ENCODE measurements at regions of chr7 and their contacts with region 1.

Region 1: DNA sequence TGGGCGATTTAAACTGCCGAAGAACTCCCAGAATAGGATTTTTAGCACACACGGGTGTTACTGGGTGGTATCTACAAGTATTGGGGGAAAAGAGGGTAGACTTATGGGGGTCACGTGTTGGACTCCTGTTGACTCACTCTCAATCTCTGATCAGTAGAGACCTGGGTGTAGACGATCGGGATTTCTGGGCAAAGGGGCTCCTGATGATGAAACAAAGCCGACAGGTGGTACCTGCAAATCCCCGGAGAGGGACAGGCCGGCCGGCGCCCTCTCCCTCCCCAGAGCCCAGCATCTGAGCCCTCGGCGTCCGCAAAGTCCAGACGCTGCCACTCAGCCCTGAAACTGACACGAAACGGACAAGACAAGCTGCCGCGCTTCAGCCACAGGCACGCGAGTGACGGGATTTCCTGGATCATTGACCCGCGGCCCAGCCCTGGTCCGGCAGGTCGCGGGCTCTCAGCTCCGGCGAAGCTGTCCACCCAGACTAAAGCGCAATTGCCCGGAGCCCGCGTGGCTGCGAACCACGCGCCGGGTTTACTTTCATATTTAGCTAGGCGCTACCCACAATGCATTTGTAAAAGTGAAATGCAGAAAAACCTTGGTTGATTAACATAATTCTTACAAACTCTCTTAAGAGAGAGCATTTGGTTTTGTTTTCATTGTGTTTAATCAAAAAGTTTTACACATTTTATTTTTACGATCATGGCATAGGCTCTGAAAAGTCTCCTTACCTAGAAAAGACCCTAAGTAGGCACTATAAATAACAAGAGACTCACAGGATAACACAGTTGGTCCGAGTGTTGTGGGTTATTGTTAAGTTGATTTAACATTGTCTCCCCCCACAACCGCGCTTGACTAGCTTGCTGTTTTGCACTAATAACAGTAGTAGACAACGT is 56.9 kb upstream of the EZH2 start:
- DNase-seq: peak; percentile 84
- ATAC-seq: peak; percentile 72
- H3K4me3 Mint-ChIP-seq: peak overlapping the region; percentile 98
- H3K27ac Mint-ChIP-seq: peak overlapping the region; percentile 100
- H3K4me1 Mint-ChIP-seq: peaks cover 17% of the 10 kb centered on the region
- H3K27me3 Mint-ChIP-seq: no peaks in the 10 kb centered on the region
- CTCF ChIP-seq: no peak

Region 2: GRCh38 chr7:148458263-148458662 is 482.7 kb before region 1 on chr7:
- CTCF ChIA-PET with region 1: no interaction called
- POLR2A ChIA-PET with region 1: no interaction called
- intact Hi-C with region 1: no loop called
- DNase-seq: no peak
- ATAC-seq: no peak
- H3K4me3 Mint-ChIP-seq: no peak overlapping the region
- H3K27ac Mint-ChIP-seq: no peak overlapping the region
- H3K4me1 Mint-ChIP-seq: no peaks in the 10 kb centered on the region
- H3K27me3 Mint-ChIP-seq: peaks cover 2% of the 10 kb centered on the region
- CTCF ChIP-seq: no peak

Region 3: GRCh38 chr7:148698397-148699023 is 242.4 kb before region 1 on chr7 and contains the start of gene CUL1:
- CTCF ChIA-PET with region 1: no interaction called
- POLR2A ChIA-PET with region 1: interaction called, 10 read pairs
- intact Hi-C with region 1: no loop called
- DNase-seq: peak; percentile 81
- ATAC-seq: peak; percentile 70
- H3K4me3 Mint-ChIP-seq: peak within 1 kb of the TSS; percentile 84
- H3K27ac Mint-ChIP-seq: peak within 1 kb of the TSS; percentile 95
- H3K4me1 Mint-ChIP-seq: peaks cover 50% of the 10 kb centered on the region
- H3K27me3 Mint-ChIP-seq: no peaks in the 10 kb centered on the region
- CTCF ChIP-seq: no peak
- total RNA-seq, gene CUL1: 60.6 to 61.2 TPM

Region 4: DNA sequence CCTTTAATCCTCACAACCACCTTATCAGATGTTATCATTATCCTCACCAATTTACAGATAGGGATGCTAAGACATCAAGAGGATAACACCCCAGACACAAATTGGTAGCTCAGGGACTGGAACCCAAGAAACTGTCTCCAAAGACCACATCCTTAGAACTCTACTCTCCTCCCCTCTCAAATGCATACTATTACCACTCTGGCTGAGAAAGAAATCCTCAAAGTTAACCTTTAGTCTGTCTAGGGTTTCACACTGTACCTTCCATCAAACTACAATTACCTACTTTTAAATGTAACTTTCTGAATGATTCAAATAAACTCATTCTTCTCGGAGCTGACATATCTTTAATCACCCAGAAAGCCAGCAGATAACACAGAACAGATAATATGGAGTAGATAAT is 63.4 kb before region 1 on chr7:
- CTCF ChIA-PET with region 1: interaction called, 17 read pairs
- POLR2A ChIA-PET with region 1: interaction called, 63 read pairs
- intact Hi-C with region 1: no loop called
- DNase-seq: no peak
- ATAC-seq: peak; percentile 71
- H3K4me3 Mint-ChIP-seq: no peak overlapping the region
- H3K27ac Mint-ChIP-seq: no peak overlapping the region
- H3K4me1 Mint-ChIP-seq: peaks cover 56% of the 10 kb centered on the region
- H3K27me3 Mint-ChIP-seq: no peaks in the 10 kb centered on the region
- CTCF ChIP-seq: no peak

Region 5: DNA sequence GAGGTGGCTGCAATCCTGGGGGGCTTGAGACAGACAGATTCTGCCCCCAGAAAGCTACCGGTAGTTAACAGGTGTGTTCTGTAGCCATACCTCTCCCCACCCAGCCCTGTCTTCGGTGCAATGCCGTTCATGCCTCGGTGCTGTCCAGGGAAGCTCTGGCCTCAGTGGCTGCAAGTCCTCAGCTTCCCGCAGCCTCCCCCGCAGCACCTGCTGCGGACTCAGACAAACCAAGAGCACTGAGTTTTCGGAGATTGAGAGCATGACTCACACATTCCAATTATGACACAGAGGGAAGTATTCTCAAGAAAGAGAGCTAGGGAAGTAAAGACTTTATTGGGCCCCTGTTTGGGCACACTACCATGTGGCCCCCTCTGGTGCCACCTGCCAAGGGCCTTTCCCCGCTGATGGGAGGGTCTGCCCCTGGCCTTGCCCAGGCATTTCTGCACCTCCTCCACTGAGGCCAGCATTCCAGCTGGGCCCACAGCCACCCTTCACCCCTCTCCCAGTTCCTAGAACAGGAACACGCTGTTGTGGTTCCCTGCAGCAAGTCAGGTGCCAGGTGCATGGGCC is 26.7 kb before region 1 on chr7:
- CTCF ChIA-PET with region 1: interaction called, 38 read pairs
- POLR2A ChIA-PET with region 1: interaction called, 107 read pairs
- intact Hi-C with region 1: loop called (anchors 1 kb)
- DNase-seq: peak; percentile 77
- ATAC-seq: peak; percentile 50
- H3K4me3 Mint-ChIP-seq: peak overlapping the region; percentile 63
- H3K27ac Mint-ChIP-seq: peak overlapping the region; percentile 99
- H3K4me1 Mint-ChIP-seq: peaks cover 74% of the 10 kb centered on the region
- H3K27me3 Mint-ChIP-seq: no peaks in the 10 kb centered on the region
- CTCF ChIP-seq: no peak

Region 6: GRCh38 chr7:148927123-148928045 is 13.6 kb before region 1 on chr7:
- CTCF ChIA-PET with region 1: interaction called, 5 read pairs
- POLR2A ChIA-PET with region 1: interaction called, 10 read pairs
- intact Hi-C with region 1: no loop called
- DNase-seq: no peak
- ATAC-seq: no peak
- H3K4me3 Mint-ChIP-seq: no peak overlapping the region
- H3K27ac Mint-ChIP-seq: peak overlapping the region; percentile 87
- H3K4me1 Mint-ChIP-seq: peaks cover 52% of the 10 kb centered on the region
- H3K27me3 Mint-ChIP-seq: no peaks in the 10 kb centered on the region
- CTCF ChIP-seq: no peak

Region 7: GRCh38 chr7:149071641-149072437 is 130.9 kb after region 1 on chr7:
- CTCF ChIA-PET with region 1: no interaction called
- POLR2A ChIA-PET with region 1: no interaction called
- intact Hi-C with region 1: no loop called
- DNase-seq: peak; percentile 63
- ATAC-seq: peak; percentile 88
- H3K4me3 Mint-ChIP-seq: peak overlapping the region; percentile 52
- H3K27ac Mint-ChIP-seq: peak overlapping the region; percentile 75
- H3K4me1 Mint-ChIP-seq: peaks cover 2% of the 10 kb centered on the region
- H3K27me3 Mint-ChIP-seq: no peaks in the 10 kb centered on the region
- CTCF ChIP-seq: no peak

Measured in activated CD8-positive, alpha-beta T cell treated with anti-CD3 and anti-CD28 coated beads for 36 hours (primary cell).